ENCODE measurements at regions of chr1 and their contacts with region 1.

Region 1: DNA sequence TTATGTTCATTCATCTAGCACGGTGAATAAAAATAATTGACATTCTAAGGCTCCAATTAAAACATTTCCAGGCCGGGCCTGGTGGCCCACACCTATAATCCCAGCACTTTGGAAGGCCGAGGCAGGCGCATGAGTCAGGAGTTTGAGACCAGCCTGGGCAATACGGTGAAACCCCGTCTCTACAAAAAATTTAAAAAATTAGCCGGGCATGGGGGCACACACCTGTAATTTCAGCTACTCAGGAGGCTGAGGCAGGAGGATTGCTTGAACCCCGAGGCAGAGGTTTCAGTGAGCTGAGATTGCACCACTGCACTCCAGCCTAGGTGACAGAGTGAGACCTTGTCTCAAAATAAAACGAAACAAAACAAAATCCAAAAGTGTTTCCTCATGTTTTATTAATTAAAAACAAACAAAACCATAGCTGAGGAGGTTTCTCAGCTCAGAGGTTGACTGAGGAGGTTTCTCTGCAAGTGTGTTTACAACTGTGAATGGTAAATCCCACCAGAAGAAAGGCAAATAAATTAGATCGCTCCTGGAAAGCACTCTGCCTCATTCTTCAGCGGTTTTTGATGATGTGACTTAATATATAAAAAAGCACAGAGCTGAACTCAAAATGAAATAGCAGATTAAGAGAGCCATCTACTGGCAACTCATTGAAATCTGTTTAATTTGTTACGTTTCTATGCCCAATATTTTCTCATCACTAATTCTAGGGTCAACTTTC is 37.7 kb upstream of the ATG4C start:
- DNase-seq: no peak
- H3K4me3 ChIP-seq: peak overlapping the region; percentile 47
- CTCF ChIP-seq: peak; percentile 28

Region 2: DNA sequence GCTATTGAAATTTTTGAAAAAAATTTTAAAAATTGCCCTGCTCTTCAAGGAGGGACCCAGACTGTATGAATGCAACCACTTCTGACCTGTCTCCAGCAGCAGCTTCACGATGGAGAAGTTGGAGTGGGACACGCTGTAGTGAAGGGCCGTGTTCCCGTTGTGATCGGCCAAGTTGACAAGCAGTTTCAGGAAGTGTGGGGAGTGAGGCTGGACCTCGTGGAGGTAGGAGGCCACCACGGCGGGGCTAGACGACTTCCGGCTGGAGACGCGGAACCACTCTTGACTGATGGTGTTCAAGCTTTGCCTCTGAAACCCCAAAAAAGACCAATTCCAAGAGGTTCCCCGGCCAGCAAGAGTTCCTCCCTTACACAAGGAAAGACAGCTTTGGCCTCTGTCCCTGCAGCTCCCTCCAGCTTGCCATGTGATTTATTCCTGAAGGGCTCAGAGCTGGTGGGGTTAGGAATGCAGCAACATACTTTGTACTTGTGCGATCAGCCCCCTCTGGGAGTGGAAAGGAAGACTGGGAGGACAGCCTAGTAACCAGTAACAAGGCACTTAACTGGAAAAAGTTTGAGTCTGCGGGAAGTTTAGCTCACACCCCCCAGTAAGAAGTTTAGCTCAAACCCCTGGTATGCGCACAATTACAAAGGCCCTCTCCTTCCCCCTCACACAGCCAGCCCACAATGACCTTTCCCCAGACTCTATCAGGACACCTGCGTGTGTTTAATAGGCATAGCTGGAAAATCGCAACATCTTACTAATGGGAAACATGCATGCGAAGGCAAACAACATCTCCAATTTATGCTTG is 483.0 kb before region 1 on chr1:
- CTCF ChIA-PET with region 1: no interaction called
- POLR2A ChIA-PET with region 1: no interaction called
- DNase-seq: no peak
- H3K4me3 ChIP-seq: no peak overlapping the region
- CTCF ChIP-seq: no peak

Region 3: DNA sequence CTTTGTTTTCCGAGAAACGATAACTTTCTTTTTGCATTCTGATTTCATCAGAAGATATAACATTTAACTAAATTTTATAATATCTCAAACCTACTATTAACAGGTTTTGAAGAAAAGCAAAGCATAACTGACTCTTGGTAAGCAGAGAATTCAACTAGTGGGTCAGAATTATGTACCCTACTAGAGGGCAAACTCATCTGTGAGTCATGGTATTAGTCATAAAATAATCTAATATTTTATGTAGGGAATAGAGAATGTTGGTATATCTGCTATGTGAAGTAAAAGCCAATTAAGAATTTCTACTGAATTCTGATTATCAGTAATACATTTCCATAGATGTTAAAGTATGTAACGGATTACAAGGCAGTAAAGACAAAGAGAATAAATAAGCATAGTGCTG is 252.6 kb before region 1 on chr1:
- CTCF ChIA-PET with region 1: interaction called, 12 read pairs
- POLR2A ChIA-PET with region 1: no interaction called
- DNase-seq: no peak
- H3K4me3 ChIP-seq: no peak overlapping the region
- CTCF ChIP-seq: no peak

Region 4: DNA sequence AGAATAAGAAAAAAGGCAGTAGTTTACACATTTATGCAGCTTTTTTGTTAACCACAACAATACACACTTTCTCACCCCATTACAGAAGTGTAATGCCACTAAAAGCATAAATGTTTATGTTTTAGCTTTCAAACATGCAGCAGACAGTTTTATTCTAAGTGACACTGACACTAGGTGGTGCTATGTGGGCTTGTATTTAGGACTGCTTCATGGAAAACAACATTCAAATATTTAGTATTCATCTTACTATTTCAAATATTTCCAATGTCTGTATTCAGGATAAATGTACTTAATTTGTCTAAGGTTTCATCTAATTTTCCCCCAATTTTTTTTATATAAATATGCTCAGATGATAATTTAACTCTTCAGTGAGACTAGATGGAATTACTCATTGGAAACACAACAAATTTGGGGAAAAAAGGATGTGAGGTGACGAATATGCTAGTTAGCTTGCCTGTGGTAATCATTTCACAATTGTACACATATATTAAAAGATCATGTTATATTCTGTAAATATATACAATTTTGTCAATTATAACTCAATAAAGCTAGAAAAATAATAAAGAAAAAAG is 238.0 kb before region 1 on chr1:
- CTCF ChIA-PET with region 1: interaction called, 166 read pairs
- POLR2A ChIA-PET with region 1: no interaction called
- DNase-seq: peak; percentile 5
- H3K4me3 ChIP-seq: no peak overlapping the region
- CTCF ChIP-seq: peak; percentile 53

Region 5: DNA sequence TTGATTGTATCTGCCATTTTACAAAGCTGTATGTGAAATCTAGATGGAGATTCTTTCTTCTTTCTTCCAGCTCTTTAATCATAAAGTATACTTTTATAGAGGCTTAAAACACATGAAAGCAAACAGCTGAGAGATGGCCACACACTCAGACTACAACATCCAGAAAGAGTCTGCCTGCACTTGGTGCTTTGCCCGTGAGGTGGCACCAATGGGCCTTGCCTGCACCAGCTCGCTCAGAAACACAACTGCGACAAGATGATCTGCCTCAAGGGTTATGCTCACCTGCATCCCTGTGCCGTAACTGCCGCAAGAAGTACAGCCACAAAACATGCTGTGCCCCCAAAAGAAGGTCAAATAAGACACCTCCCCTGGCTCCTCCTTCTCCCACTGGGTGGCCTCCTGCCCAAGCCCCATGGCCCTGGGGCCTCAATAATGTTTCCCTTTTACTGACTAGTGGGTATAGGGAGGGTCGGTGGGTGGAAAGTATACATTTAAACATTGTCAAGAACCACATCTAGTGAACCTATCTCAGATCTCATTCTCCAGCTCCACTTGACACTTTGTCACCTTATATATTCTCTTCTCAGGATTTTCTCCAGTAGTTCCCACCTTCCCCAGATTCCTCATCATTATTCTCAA is 215.6 kb before region 1 on chr1:
- CTCF ChIA-PET with region 1: interaction called, 91 read pairs
- POLR2A ChIA-PET with region 1: no interaction called
- DNase-seq: peak; percentile 5
- H3K4me3 ChIP-seq: no peak overlapping the region
- CTCF ChIP-seq: peak; percentile 86

Measured in AG04449 (cell line).